Activated CD4-positive, alpha-beta memory T cell treated with anti-CD3 and anti-CD28 coated beads, Interleukin-2, amount 10 ng/mL, durations not matched to agents 7 days and 5 days (primary cell): ENCODE measurements at regions of chr10 and their contacts with region 1.

Region 1: DNA sequence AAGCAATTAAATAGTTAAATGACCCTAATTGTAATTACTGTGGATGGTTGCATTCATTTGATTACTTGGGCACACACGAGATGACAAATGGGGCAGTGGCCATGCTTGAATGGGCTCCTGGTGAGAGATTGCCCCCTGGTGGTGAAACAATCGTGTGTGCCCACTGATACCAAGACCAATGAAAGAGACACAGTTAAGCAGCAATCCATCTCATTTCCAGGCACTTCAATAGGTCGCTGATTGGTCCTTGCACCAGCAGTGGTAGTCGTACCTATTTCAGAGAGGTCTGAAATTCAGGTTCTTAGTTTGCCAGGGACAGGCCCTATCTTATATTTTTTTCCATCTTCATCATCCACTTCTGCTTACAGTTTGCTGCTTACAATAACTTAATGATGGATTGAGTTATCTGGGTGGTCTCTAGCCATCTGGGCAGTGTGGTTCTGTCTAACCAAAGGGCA is 8.3 kb downstream of the PCBD1 start:
- DNase-seq: peak; percentile 77
- H3K4me3 Mint-ChIP-seq: no peak overlapping the region
- H3K27ac Mint-ChIP-seq: no peak overlapping the region
- H3K4me1 Mint-ChIP-seq: peaks cover 5% of the 10 kb centered on the region
- H3K27me3 Mint-ChIP-seq: no peaks in the 10 kb centered on the region

Region 2: DNA sequence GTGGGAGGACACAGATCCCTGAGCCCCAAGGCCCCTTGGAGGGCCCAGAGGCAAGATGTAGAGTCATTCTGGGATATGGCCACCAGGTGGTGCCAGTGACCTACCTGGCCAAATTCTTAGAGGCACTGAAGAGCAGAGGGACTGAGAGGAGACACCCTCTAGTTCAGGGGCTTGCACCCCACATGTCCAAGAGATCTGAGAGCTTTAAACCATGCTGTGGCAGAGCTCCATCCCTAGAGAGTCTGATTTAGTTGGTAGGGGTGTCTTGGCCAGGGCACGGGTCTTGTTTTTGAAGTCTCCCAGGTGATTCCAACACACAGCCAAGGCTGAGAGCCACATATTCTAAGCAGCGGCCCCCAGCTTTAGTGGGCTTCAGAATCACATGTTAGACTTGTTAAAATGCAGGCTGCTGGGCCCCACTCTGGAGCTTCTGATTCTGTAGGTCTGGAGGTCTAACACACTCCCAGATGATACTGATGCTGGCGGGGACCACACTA is 330.1 kb before region 1 on chr10:
- CTCF ChIA-PET with region 1: interaction called, 11 read pairs
- POLR2A ChIA-PET with region 1: no interaction called
- DNase-seq: peak; percentile 77
- H3K4me3 Mint-ChIP-seq: no peak overlapping the region
- H3K27ac Mint-ChIP-seq: peak overlapping the region; percentile 7
- H3K4me1 Mint-ChIP-seq: no peaks in the 10 kb centered on the region
- H3K27me3 Mint-ChIP-seq: peaks cover 5% of the 10 kb centered on the region

Region 3: DNA sequence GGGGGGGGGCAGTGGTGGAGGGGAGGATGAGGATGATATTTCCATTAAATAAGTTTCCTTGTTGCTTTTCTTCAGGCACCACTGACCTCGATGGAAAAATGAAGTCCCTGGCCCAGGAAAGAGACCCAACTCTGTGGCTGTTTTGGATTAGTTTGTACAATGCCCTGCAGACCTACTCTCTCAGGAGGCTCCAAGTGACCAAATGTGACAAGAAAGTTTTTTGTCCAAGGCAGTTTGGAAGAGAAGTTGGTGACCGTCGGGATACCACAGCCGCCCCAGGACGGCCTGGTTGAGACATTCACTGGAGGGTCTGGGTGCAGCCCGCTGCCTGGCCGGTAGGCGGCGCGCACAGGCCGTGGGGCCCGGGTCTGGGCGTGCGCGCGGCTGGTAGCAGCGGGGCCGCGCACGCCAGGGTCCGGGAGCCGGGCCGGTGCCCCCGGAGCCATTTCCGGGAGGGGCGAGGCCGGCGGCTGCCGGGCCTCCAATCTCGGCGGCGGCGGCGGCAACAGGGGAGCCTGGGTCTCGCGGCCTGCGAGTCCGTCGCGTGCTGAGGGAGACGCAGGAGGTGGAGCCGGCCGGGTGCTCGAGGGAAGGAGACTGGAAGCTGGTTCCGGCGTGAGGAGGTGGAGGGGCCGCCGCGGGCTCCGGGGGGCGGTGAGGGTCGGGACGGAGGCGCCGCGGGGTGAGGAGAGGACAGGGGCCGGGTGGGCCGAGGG is 64.4 kb before region 1 on chr10 and contains the start of gene SGPL1:
- CTCF ChIA-PET with region 1: interaction called, 18 read pairs
- POLR2A ChIA-PET with region 1: interaction called, 3 read pairs
- DNase-seq: peak; percentile 87
- H3K4me3 Mint-ChIP-seq: peak within 1 kb of the TSS; percentile 91
- H3K27ac Mint-ChIP-seq: peak within 1 kb of the TSS; percentile 77
- H3K4me1 Mint-ChIP-seq: peaks cover 20% of the 10 kb centered on the region
- H3K27me3 Mint-ChIP-seq: no peaks in the 10 kb centered on the region
- total RNA-seq, gene SGPL1: 25.8 to 28.5 TPM

Region 4: GRCh38 chr10:71085689-71086438 is 205.8 kb after region 1 on chr10:
- CTCF ChIA-PET with region 1: no interaction called
- POLR2A ChIA-PET with region 1: no interaction called
- DNase-seq: peak; percentile 4
- H3K4me3 Mint-ChIP-seq: no peak overlapping the region
- H3K27ac Mint-ChIP-seq: no peak overlapping the region
- H3K4me1 Mint-ChIP-seq: no peaks in the 10 kb centered on the region
- H3K27me3 Mint-ChIP-seq: no peaks in the 10 kb centered on the region